Activated CD4-positive, alpha-beta T cell treated with anti-CD3 and anti-CD28 coated beads for 36 hours (primary cell): ENCODE measurements at regions of chr1 and their contacts with region 1.

Region 1: GRCh38 chr1:93814059-93814794 is 64.8 kb downstream of the DNTTIP2 start:
- DNase-seq: peak; percentile 67
- ATAC-seq: peak; percentile 45
- H3K4me3 Mint-ChIP-seq: no peak overlapping the region
- H3K27ac Mint-ChIP-seq: no peak overlapping the region
- H3K4me1 Mint-ChIP-seq: peaks cover 21% of the 10 kb centered on the region
- H3K27me3 Mint-ChIP-seq: no peaks in the 10 kb centered on the region

Region 2: GRCh38 chr1:93021539-93022134 is 792.6 kb before region 1 on chr1:
- CTCF ChIA-PET with region 1: no interaction called
- POLR2A ChIA-PET with region 1: no interaction called
- intact Hi-C with region 1: no loop called
- DNase-seq: no peak
- ATAC-seq: peak; percentile 72
- H3K4me3 Mint-ChIP-seq: no peak overlapping the region
- H3K27ac Mint-ChIP-seq: no peak overlapping the region
- H3K4me1 Mint-ChIP-seq: no peaks in the 10 kb centered on the region
- H3K27me3 Mint-ChIP-seq: peaks cover 3% of the 10 kb centered on the region

Region 3: GRCh38 chr1:93437976-93438605 is 376.1 kb before region 1 on chr1:
- CTCF ChIA-PET with region 1: interaction called, 6 read pairs
- POLR2A ChIA-PET with region 1: no interaction called
- intact Hi-C with region 1: loop called (anchors 1 kb)
- DNase-seq: no peak
- ATAC-seq: no peak
- H3K4me3 Mint-ChIP-seq: no peak overlapping the region
- H3K27ac Mint-ChIP-seq: no peak overlapping the region
- H3K4me1 Mint-ChIP-seq: no peaks in the 10 kb centered on the region
- H3K27me3 Mint-ChIP-seq: peaks cover 2% of the 10 kb centered on the region

Region 4: GRCh38 chr1:93638981-93639380 is 175.2 kb before region 1 on chr1:
- CTCF ChIA-PET with region 1: interaction called, 256 read pairs
- POLR2A ChIA-PET with region 1: no interaction called
- intact Hi-C with region 1: no loop called
- DNase-seq: no peak
- ATAC-seq: no peak
- H3K4me3 Mint-ChIP-seq: no peak overlapping the region
- H3K27ac Mint-ChIP-seq: no peak overlapping the region
- H3K4me1 Mint-ChIP-seq: peaks cover 16% of the 10 kb centered on the region
- H3K27me3 Mint-ChIP-seq: no peaks in the 10 kb centered on the region

Region 5: DNA sequence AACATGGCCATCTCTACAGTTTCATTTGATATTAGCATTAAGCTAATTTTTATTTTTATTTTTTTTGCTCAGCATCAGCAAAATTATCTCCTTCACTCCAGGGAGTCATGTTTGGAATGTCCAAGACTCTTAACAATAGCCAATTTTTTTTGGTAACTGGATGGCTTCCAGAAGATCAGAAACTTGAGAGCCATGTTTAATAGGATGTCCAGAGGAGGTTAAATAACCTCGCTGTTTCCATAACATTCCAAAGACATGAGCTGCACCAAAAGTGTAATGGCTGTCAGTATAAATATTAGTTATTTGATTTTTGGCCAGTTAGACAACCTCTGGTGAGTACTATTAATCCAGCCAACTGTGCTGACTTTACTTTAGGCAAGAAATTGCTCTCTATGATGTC is 15.9 kb before region 1 on chr1:
- CTCF ChIA-PET with region 1: interaction called, 22 read pairs
- POLR2A ChIA-PET with region 1: no interaction called
- intact Hi-C with region 1: no loop called
- DNase-seq: no peak
- ATAC-seq: no peak
- H3K4me3 Mint-ChIP-seq: no peak overlapping the region
- H3K27ac Mint-ChIP-seq: no peak overlapping the region
- H3K4me1 Mint-ChIP-seq: no peaks in the 10 kb centered on the region
- H3K27me3 Mint-ChIP-seq: no peaks in the 10 kb centered on the region

Region 6: GRCh38 chr1:93878889-93879586 is 64.8 kb after region 1 on chr1 and contains the start of gene DNTTIP2:
- CTCF ChIA-PET with region 1: no interaction called
- POLR2A ChIA-PET with region 1: no interaction called
- intact Hi-C with region 1: loop called in 1 of 2 experiments (anchors 2 kb)
- DNase-seq: peak; percentile 94
- ATAC-seq: peak; percentile 93
- H3K4me3 Mint-ChIP-seq: peak within 1 kb of the TSS; percentile 92
- H3K27ac Mint-ChIP-seq: peak within 1 kb of the TSS; percentile 97
- H3K4me1 Mint-ChIP-seq: peaks cover 45% of the 10 kb centered on the region
- H3K27me3 Mint-ChIP-seq: no peaks in the 10 kb centered on the region
- total RNA-seq, gene DNTTIP2: 82.8 to 84.9 TPM